ENCODE measurements at regions of chr11 and their contacts with region 1.

Region 1: GRCh38 chr11:15159085-15159484 is 44.4 kb downstream of the INSC start:
- DNase-seq: no peak
- H3K4me3 ChIP-seq: no peak overlapping the region
- H3K27ac ChIP-seq: no peak overlapping the region
- H3K27me3 ChIP-seq: peaks cover 0 to 8% (median 0%) of the 10 kb centered on the region in 45 donors
- CTCF ChIP-seq: peak in 28 of 56 donors; percentile 10 to 39 (median 23)

Region 2: DNA sequence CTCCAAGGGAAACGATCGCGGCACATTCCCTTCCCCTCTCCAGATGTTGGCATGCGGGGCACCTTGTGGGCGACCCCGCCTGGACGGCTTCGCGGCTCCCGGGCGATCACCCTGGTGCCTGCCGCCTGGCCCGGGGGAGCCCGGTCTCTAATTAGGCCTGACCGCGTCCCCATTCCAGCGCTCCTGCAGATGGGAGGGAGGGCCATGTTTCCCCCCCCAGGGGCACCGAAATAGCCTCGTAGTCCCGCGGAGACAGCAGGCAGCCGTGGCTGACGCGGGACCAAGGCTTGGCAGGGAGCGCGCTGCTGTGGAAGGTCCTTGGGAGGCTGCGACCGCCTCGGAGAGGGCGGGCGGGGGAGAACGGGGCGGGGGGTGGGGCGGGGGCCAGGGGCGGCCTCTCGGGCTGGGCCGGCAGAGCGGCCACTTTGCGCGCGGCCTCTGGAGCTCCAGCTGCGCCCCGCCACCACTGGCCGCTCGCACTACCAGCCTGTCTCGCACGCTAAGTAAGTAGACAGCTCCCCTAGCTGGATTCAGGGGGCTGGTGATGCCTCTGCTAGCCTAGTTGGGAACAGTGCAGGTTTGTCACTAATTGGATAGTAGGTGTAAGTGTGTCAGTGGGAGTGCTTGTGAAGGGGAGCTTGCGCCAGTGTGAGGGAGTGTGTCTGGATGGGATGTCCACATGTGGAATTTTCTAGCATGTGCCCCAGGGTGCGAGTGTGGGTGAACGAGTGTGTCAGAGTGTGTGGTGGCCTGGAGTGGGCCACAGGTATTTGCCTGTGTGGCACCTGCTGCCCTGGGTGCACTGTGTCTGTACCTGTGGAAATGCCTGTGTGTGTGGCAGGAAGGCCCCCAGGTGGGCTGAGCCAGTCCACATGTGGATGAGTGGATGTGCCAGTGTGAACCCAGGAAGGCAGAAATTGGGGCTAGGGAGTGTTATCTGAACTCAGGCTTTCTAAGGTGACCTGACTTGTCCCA is 44.3 kb before region 1 on chr11 and contains the start of gene INSC:
- intact Hi-C with region 1: loop called in 1 of 2 experiments (anchors 5 kb)
- DNase-seq: peak in 1 of 10 donors; percentile 41
- H3K4me3 ChIP-seq: peak within 1 kb of the TSS in 57 of 59 donors; percentile 2 to 63 (median 44)
- H3K27ac ChIP-seq: no peak within 1 kb of the TSS
- H3K27me3 ChIP-seq: peaks cover 0 to 34% (median 10%) of the 10 kb centered on the region in 45 donors
- CTCF ChIP-seq: no peak
- total RNA-seq, gene INSC: 0.14 to 1.7 (median 0.46) TPM in 74 of 120 experiments, not detected in the others